ENCODE measurements at regions of chr1 and their contacts with region 1.

Region 1: GRCh38 chr1:167687919-167688519 is 33.8 kb upstream of the MPZL1 start:
- DNase-seq: peak; percentile 47 to 81 (median 71)
- ATAC-seq: peak; percentile 84
- H3K4me3 ChIP-seq: no peak overlapping the region
- H3K4me3 Mint-ChIP-seq: no peak overlapping the region
- H3K27ac ChIP-seq: no peak overlapping the region
- H3K27ac Mint-ChIP-seq: peak overlapping the region in 7 of 9 donors; percentile 19 to 82 (median 60)
- H3K4me1 ChIP-seq: no peaks in the 10 kb centered on the region
- H3K4me1 Mint-ChIP-seq: peaks cover 10 to 29% (median 25%) of the 10 kb centered on the region in 7 donors
- H3K27me3 ChIP-seq: no peaks in the 10 kb centered on the region
- H3K27me3 Mint-ChIP-seq: no peaks in the 10 kb centered on the region

Region 2: DNA sequence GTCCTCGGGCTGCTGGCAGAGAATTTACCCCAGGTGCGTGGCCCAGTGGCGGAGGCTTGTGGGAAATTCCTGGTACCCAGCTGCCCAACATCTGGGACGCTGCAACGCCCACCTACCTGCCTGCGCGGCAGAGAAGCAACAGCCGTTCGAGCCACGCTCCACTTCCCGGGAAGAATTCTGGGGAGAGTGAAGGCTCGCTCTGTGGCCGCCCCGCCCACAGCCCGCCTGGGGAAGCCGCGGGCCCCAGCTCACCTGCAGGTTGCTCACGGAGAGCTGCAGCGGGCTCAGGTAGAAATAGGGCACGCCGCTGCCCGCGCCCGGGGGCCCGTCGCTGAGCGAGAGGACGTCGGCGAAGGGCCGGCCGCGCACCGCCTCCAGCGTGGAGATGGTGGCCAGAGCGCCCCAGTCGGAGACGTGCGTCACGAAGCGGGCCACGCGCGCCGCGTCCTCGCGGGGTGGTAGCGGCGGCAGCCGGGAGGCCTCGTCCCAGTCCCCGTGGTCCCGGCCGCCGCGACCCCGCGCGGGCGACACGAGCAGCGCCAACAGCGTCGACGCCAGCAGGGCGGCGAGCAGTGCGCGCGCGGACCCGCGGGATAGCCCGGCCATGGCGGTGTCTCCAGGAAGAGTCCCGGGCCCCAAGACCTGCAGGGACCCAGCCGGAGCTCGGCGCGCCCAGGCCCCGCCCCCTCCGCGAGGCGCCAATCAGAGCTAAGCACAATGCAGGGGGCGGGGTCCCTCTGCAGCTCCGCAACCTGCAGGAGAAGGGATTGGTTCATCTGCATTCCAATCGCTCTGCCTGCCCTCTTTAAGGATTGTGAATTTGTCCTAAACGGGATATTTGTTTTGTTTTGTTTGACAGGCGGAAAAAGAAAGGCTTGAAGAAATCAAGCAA is 134.6 kb before region 1 on chr1 and contains the start of gene CREG1:
- CTCF ChIA-PET with region 1: interaction called, 10 read pairs
- POLR2A ChIA-PET with region 1: no interaction called
- intact Hi-C with region 1: loop called (anchors 1 kb)
- DNase-seq: peak; percentile 82 to 92 (median 88)
- ATAC-seq: peak; percentile 98
- H3K4me3 ChIP-seq: peak within 1 kb of the TSS; percentile 71
- H3K4me3 Mint-ChIP-seq: peak within 1 kb of the TSS; percentile 85 to 97 (median 92)
- H3K27ac ChIP-seq: peak within 1 kb of the TSS; percentile 72
- H3K27ac Mint-ChIP-seq: peak within 1 kb of the TSS; percentile 43 to 88 (median 80)
- H3K4me1 ChIP-seq: peaks cover 19% of the 10 kb centered on the region in 2 donors
- H3K4me1 Mint-ChIP-seq: peaks cover 35 to 58% (median 46%) of the 10 kb centered on the region in 7 donors
- H3K27me3 ChIP-seq: no peaks in the 10 kb centered on the region
- H3K27me3 Mint-ChIP-seq: peaks cover 0 to 4% (median 0%) of the 10 kb centered on the region in 5 donors
- total RNA-seq, gene CREG1: 10.6 to 33.4 (median 23.1) TPM

Region 3: DNA sequence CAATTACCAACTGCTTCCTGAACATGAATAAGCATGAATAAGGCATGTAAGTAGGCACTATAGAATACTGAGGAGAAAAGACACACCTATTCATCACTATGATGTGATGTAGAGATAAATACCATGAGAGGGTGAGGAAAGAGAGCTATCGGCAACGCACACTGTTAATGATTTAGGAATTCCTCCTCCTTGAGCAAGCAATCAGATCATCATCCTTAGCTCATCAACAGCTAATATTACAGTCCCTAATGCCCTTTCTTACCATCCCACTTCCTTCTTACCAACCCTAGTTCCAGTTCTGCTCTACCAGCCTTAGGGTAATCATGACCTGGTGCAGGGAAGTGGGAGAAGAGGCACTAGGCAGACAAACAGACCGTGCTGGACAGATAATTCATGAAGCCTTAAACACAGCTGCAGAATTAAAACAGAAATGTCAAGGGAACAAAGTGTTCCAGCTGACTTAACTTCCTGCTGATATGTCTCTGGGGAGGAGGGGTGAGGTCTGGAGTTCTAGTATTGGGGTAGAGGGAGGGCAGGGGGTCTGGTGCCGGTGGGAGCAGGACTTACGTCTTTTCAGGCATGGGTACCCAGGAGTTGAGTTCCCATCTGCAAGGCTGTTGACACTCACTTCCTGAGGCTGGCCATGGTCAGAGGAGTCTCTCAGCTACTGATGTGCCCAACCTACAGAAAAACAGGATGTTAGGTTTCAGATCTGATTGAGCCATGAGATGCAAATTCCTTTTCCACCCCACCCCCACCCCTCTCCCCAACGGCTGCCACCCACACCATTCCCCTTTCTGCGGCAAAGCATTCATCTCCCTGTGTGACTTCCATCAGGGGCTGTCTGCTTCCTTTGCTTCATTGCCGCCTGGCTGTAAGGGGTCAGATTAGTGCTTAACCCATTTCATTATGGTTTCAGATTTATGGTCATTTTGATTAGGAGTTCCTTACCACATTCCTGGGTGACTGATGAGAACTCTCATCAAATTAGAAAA is 70.6 kb before region 1 on chr1:
- CTCF ChIA-PET with region 1: interaction called, 10 read pairs
- POLR2A ChIA-PET with region 1: no interaction called
- intact Hi-C with region 1: no loop called
- DNase-seq: peak in 3 of 9 donors; percentile 22 to 28 (median 22)
- ATAC-seq: peak; percentile 85
- H3K4me3 ChIP-seq: peak overlapping the region; percentile 14
- H3K4me3 Mint-ChIP-seq: peak overlapping the region; percentile 73 to 96 (median 78)
- H3K27ac ChIP-seq: peak overlapping the region; percentile 66
- H3K27ac Mint-ChIP-seq: peak overlapping the region; percentile 83 to 96 (median 90)
- H3K4me1 ChIP-seq: peaks cover 16 to 35% of the 10 kb centered on the region in 2 donors
- H3K4me1 Mint-ChIP-seq: peaks cover 47 to 83% (median 69%) of the 10 kb centered on the region in 7 donors
- H3K27me3 ChIP-seq: no peaks in the 10 kb centered on the region
- H3K27me3 Mint-ChIP-seq: no peaks in the 10 kb centered on the region

Region 4: GRCh38 chr1:167635156-167635648 is 52.8 kb before region 1 on chr1:
- CTCF ChIA-PET with region 1: interaction called, 33 read pairs
- POLR2A ChIA-PET with region 1: interaction called, 6 read pairs
- intact Hi-C with region 1: loop called (anchors 1 kb)
- DNase-seq: no peak
- ATAC-seq: no peak
- H3K4me3 ChIP-seq: no peak overlapping the region
- H3K4me3 Mint-ChIP-seq: peak overlapping the region in 7 of 10 donors; percentile 23 to 99 (median 85)
- H3K27ac ChIP-seq: peak overlapping the region; percentile 61
- H3K27ac Mint-ChIP-seq: peak overlapping the region in 8 of 9 donors; percentile 53 to 95 (median 86)
- H3K4me1 ChIP-seq: peaks cover 67 to 76% of the 10 kb centered on the region in 2 donors
- H3K4me1 Mint-ChIP-seq: peaks cover 71 to 90% (median 82%) of the 10 kb centered on the region in 7 donors
- H3K27me3 ChIP-seq: no peaks in the 10 kb centered on the region
- H3K27me3 Mint-ChIP-seq: no peaks in the 10 kb centered on the region

Region 5: DNA sequence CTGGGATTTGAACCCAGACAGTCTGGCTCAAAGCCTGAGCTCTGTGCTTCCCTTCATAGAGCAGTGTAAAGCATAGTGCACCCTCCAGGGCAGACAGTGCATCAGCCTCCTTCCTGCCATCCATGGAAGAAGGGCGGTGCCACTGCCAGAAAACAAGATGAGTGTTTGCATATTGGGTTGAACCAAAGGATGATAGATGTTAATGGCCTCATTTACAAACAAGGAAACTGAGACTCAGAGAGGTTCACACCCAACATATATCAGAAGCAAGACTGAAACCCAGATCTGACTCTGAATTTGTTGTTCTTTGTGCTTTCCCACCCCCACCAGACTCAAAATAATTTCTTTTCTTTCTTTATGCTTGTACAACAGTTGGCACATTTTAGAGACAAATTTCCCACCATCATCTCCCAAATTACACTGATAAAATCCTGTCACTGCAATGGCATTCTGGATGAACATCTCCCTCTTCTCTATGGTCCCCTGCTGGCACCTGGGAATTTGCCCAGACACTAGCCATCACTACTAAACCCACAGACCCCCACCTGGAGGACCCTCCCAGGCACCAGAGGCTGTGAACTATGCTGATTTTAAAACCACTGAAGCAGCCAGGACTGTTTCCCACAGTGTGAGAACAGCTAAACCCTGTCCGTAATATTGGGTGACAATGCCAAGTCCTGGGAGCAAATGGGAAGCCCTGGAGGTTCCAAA is 11.7 kb before region 1 on chr1:
- CTCF ChIA-PET with region 1: interaction called, 10 read pairs
- POLR2A ChIA-PET with region 1: no interaction called
- intact Hi-C with region 1: no loop called
- DNase-seq: no peak
- ATAC-seq: peak; percentile 44
- H3K4me3 ChIP-seq: no peak overlapping the region
- H3K4me3 Mint-ChIP-seq: peak overlapping the region in 2 of 10 donors; percentile 14 to 21
- H3K27ac ChIP-seq: peak overlapping the region; percentile 7
- H3K27ac Mint-ChIP-seq: peak overlapping the region in 5 of 9 donors; percentile 32 to 89 (median 75)
- H3K4me1 ChIP-seq: peaks cover 9 to 19% of the 10 kb centered on the region in 2 donors
- H3K4me1 Mint-ChIP-seq: peaks cover 32 to 62% (median 38%) of the 10 kb centered on the region in 7 donors
- H3K27me3 ChIP-seq: no peaks in the 10 kb centered on the region
- H3K27me3 Mint-ChIP-seq: no peaks in the 10 kb centered on the region

Region 6: DNA sequence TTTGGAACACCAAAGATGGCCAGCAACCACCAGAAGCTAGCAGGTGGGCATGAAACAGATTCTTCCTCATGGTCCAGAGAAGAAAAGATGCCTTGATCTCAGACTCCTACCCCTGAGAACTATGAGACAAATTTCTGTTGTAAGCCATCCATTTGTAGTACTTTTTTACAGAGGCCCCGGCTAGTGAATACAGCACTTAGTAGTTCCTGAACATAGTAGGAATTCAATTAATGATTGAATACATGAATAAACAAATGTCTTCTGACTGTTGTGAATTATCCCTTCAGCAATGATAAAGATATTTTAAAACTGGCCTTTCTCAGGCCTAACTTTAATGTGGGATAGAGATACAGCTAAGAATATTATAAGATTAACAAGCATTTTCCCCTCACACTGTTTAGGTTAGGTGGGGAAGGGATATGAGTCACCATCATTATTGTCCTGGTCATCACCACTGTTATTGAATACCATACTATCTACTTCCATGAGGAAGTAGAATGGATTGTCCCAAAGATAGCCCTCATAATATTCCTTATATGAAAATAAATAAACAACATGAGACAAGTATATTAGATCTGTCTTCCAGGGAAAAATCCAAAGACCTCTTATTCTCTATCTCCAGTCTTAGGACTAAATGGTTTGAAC is 174.5 kb after region 1 on chr1:
- CTCF ChIA-PET with region 1: no interaction called
- POLR2A ChIA-PET with region 1: no interaction called
- intact Hi-C with region 1: no loop called
- DNase-seq: no peak
- ATAC-seq: no peak
- H3K4me3 ChIP-seq: no peak overlapping the region
- H3K4me3 Mint-ChIP-seq: no peak overlapping the region
- H3K27ac ChIP-seq: no peak overlapping the region
- H3K27ac Mint-ChIP-seq: no peak overlapping the region
- H3K4me1 ChIP-seq: no peaks in the 10 kb centered on the region
- H3K4me1 Mint-ChIP-seq: no peaks in the 10 kb centered on the region
- H3K27me3 ChIP-seq: no peaks in the 10 kb centered on the region
- H3K27me3 Mint-ChIP-seq: peaks cover 0 to 2% (median 0%) of the 10 kb centered on the region in 5 donors

Measured in naive thymus-derived CD4-positive, alpha-beta T cell (primary cell).